Tibial artery (tissue), 4 donors: ENCODE measurements at regions of chr4 and their contacts with region 1.

Region 1: GRCh38 chr4:8560267-8561047 is 19.7 kb upstream of the GPR78 start:
- DNase-seq: peak in 1 of 2 donors; percentile 51
- H3K4me3 ChIP-seq: no peak overlapping the region
- H3K27ac ChIP-seq: no peak overlapping the region
- H3K4me1 ChIP-seq: no peaks in the 10 kb centered on the region
- H3K27me3 ChIP-seq: peaks cover 0 to 13% of the 10 kb centered on the region in 2 donors
- CTCF ChIP-seq: no peak

Region 2: GRCh38 chr4:8886612-8887406 is 326.4 kb after region 1 on chr4:
- intact Hi-C with region 1: no loop called
- DNase-seq: no peak
- H3K4me3 ChIP-seq: no peak overlapping the region
- H3K27ac ChIP-seq: no peak overlapping the region
- H3K4me1 ChIP-seq: peaks cover 0 to 4% (median 0%) of the 10 kb centered on the region in 4 donors
- H3K27me3 ChIP-seq: peaks cover 0 to 86% of the 10 kb centered on the region in 2 donors
- CTCF ChIP-seq: no peak

Region 3: DNA sequence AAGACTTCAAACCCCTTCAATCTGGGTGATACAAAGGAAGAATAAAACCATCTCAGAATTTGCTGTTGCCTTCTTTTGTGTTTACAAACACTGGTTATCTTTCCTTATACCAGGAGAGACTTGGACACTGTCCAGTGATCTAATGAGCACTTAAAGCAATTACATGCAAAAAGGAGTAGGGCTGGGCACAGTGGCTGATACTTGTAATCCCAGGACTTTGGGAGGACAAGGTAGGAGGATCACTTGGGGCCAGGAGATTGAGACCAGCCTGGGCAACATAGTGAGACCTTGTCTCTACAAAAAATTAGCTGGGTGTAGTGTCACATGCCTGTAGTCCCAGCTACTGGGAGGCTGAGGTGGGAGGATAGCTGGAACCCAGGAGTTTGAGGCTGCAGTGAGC is 1125.2 kb after region 1 on chr4:
- intact Hi-C with region 1: loop called (anchors 5 kb)
- DNase-seq: no peak
- H3K4me3 ChIP-seq: no peak overlapping the region
- H3K27ac ChIP-seq: no peak overlapping the region
- H3K4me1 ChIP-seq: peaks cover 0 to 2% (median 0%) of the 10 kb centered on the region in 4 donors
- H3K27me3 ChIP-seq: no peaks in the 10 kb centered on the region
- CTCF ChIP-seq: no peak